ENCODE measurements at regions of chr6 and their contacts with region 1.

Region 1: DNA sequence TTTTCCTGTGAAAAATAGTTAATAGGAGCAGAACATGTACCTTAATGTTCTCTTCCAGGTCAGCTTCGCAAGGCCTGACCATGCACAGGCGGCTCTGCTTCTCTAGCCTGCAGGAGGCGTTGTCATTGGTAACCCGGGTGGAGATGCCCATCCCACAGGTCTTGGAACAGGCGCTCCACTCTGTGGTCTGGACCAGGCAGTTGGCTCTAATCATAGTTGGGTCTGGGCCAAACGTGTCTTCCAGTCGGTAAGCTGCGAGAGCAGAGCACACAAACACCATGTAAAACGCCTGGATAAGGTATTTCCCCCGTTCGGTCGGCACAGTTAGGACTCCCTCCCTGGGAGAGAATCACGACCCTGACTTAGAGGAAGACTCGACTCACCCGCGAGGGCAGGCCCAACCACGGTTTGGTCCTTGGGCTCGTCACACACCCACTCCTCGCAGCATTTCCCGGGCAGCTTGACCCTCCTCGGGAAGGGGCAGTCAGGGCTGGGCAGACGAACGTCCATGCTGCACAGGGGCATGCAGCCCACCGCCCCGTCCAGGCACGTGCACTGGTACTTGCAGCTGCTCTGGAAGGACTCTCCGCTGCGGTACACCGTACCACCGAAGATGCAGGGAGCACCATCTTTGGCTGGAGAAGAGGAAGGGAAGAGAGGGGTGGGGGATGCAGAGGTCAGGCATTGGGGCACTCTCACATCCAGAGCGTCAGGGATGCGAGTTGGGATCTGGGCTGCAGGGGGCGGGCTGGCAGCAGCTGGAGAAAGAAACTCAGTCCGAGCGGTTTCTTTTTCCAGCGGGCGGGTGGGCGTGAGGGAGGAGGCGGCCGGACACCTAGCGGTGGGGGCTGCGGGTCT is 1.0 kb downstream of the CCN2 start:
- DNase-seq: peak; percentile 77
- ATAC-seq: peak; percentile 69
- H3K4me3 ChIP-seq: peak overlapping the region; percentile 71 to 73
- H3K27ac ChIP-seq: peak overlapping the region; percentile 84
- H3K4me1 ChIP-seq: peaks cover 50% of the 10 kb centered on the region
- H3K27me3 ChIP-seq: no peaks in the 10 kb centered on the region
- CTCF ChIP-seq: peak; percentile 83

Region 2: DNA sequence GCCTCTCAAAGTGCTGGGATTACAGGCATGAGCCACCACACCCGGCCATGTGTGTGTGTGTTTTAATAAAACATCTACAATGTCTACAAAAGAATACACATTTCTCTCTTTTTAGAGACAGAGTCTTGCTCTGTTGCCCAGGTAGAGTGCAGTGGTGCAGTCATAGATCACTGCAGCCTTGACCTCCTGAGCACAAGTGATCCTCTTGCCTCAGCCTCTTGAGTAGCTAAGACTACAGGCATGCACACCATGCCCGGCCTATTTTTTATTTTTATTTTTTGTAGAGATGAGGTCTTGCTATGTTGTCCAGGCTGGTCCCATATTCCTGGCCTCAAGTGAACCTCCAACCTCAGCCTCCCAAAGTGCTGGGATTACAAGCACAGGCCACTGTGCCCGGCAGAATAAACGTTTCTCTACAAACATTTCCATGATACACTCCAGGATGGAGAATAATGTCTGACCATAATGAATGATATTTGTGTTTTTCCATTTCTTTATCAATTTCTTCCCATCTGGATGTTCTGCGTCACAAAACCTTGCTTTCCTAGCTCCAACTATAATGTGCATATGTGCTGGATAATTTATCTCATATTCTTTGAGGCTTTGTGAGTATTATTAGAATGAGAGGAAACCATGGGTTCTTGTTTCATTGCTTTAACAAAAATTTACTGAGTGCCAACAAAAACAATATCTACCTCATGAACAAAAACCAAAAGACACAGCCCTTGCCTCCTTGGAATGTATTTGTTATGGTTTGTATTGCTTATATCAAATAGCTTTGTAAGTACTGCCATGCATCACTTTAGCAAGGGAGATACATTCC is 29.6 kb after region 1 on chr6:
- CTCF ChIA-PET with region 1: interaction called, 3 read pairs
- POLR2A ChIA-PET with region 1: interaction called, 12 read pairs
- in situ Hi-C with region 1: no loop called
- intact Hi-C with region 1: no loop called
- DNase-seq: no peak
- ATAC-seq: peak; percentile 55; the same call in 1 of the 2 replicates
- H3K4me3 ChIP-seq: no peak overlapping the region
- H3K27ac ChIP-seq: peak overlapping the region; percentile 64; the same call in 1 of the 2 replicates
- H3K4me1 ChIP-seq: peaks cover 15% of the 10 kb centered on the region
- H3K27me3 ChIP-seq: no peaks in the 10 kb centered on the region
- CTCF ChIP-seq: no peak

Region 3: DNA sequence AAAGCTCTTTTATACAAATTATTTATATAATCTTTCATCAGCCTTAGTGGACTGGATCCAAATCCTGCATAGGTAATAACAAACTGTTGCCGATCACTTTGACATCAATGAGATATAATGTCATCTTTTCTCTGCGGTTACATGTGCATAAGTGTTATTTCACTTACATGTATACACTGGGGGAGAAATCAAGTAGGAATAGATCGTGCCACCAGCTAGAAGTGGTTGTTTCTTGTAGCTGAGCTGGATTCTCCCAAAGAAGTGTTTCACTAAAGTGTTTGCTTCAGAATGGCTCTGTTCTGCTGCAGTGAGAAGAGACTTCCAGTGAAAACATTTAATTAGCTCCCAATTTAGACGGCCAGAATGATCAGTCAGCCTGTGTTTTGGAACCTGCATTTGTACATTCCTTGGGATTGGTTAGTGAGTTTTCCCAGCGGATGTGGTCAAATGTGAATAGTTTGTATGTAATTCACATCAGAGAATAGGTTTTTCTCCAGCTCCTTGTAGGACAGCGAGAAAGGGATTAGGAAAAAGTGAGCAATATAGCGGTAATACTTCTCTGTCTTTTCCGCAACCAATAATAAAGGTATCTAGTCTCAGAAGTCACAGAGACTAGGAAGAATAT is 164.2 kb after region 1 on chr6:
- CTCF ChIA-PET with region 1: no interaction called
- POLR2A ChIA-PET with region 1: no interaction called
- in situ Hi-C with region 1: no loop called
- intact Hi-C with region 1: no loop called
- DNase-seq: no peak
- ATAC-seq: no peak
- H3K4me3 ChIP-seq: no peak overlapping the region
- H3K27ac ChIP-seq: no peak overlapping the region
- H3K4me1 ChIP-seq: 0 out of 2 replicates have a peak, but pooled peaks cover 2% of the 10 kb centered on the region
- H3K27me3 ChIP-seq: no peaks in the 10 kb centered on the region
- CTCF ChIP-seq: no peak

Region 4: GRCh38 chr6:132218059-132218696 is 268.0 kb after region 1 on chr6:
- CTCF ChIA-PET with region 1: no interaction called
- POLR2A ChIA-PET with region 1: no interaction called
- in situ Hi-C with region 1: no loop called
- intact Hi-C with region 1: loop called (anchors 5 kb)
- DNase-seq: no peak
- ATAC-seq: no peak
- H3K4me3 ChIP-seq: no peak overlapping the region
- H3K27ac ChIP-seq: no peak overlapping the region
- H3K4me1 ChIP-seq: no peaks in the 10 kb centered on the region; the same call in 1 of the 2 replicates
- H3K27me3 ChIP-seq: no peaks in the 10 kb centered on the region
- CTCF ChIP-seq: peak; percentile 65; the same call in 1 of the 2 replicates

Region 5: GRCh38 chr6:133352046-133352445 is 1401.9 kb after region 1 on chr6:
- CTCF ChIA-PET with region 1: no interaction called
- POLR2A ChIA-PET with region 1: no interaction called
- in situ Hi-C with region 1: no loop called
- intact Hi-C with region 1: no loop called
- DNase-seq: no peak
- ATAC-seq: no peak
- H3K4me3 ChIP-seq: no peak overlapping the region
- H3K27ac ChIP-seq: no peak overlapping the region
- H3K4me1 ChIP-seq: no peaks in the 10 kb centered on the region
- H3K27me3 ChIP-seq: no peaks in the 10 kb centered on the region
- CTCF ChIP-seq: no peak